ENCODE measurements at regions of chr18 and their contacts with region 1.

Region 1: DNA sequence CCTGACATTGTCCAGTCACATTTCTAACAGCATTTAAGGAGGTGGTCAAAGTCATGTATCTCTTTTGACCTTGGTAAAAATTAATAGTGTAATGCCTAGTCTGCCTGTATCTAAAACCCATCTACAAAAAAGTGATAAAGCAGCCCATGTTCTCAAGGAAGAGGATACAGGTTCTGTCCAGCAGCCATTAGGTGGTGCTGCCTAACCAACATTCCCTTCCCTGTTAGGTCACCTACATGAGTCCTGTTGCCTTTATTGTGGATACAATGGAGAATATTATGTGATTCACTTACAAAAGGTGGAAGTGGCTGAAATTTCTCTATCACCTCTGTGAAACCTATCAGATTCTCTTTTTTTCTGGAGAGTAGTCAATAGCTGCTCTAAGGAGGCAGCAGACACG is 52.5 kb downstream of the AQP4 start:
- DNase-seq: peak in 1 of 2 donors; percentile 30
- ATAC-seq: peak; percentile 53 to 73
- H3K4me3 ChIP-seq: no peak overlapping the region
- H3K27ac ChIP-seq: no peak overlapping the region
- H3K4me1 ChIP-seq: no peaks in the 10 kb centered on the region
- H3K27me3 ChIP-seq: no peaks in the 10 kb centered on the region
- CTCF ChIP-seq: peak in 4 of 5 experiments; percentile 14 to 61 (median 44)
- POLR2A ChIP-seq: no peak

Region 2: DNA sequence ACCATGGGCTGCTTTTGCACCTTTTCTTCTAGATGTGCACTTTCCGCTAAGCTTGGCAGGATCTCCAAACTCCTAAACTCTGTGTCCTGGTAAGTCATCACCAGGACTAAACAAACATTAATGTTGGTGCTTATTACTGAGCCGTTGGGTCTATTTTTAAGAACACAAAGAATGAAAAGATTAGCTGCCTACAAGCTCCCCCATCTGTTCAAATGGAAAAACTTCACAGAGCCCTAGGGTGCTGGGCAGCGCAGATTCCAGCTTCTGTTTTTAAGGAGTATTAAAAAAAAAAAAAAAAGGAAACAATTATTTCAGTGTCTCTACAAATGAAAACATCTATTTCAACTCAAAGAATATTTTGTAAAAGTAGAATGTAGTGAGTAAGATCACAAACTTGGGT is 150.2 kb after region 1 on chr18:
- in situ Hi-C with region 1: no loop called
- intact Hi-C with region 1: loop called (anchors 10 kb)
- DNase-seq: no peak
- ATAC-seq: peak in 1 of 2 donors; percentile 30
- H3K4me3 ChIP-seq: no peak overlapping the region
- H3K27ac ChIP-seq: no peak overlapping the region
- H3K4me1 ChIP-seq: peaks cover 0 to 6% of the 10 kb centered on the region in 2 donors
- H3K27me3 ChIP-seq: no peaks in the 10 kb centered on the region
- CTCF ChIP-seq: peak in 2 of 5 experiments; percentile 14 to 31
- POLR2A ChIP-seq: no peak

Region 3: GRCh38 chr18:27005589-27005988 is 192.5 kb after region 1 on chr18:
- in situ Hi-C with region 1: loop called in 1 of 4 experiments (anchors 5 kb)
- intact Hi-C with region 1: loop called (anchors 2 kb)
- DNase-seq: no peak
- ATAC-seq: no peak
- H3K4me3 ChIP-seq: no peak overlapping the region
- H3K27ac ChIP-seq: no peak overlapping the region
- H3K4me1 ChIP-seq: no peaks in the 10 kb centered on the region
- H3K27me3 ChIP-seq: no peaks in the 10 kb centered on the region
- CTCF ChIP-seq: peak in 1 of 5 experiments; percentile 20
- POLR2A ChIP-seq: no peak